ENCODE measurements at regions of chr6 and their contacts with region 1.

Region 1: GRCh38 chr6:146429806-146430205 is 113.8 kb upstream of the RAB32 start:
- DNase-seq: no peak
- H3K4me3 ChIP-seq: no peak overlapping the region
- CTCF ChIP-seq: no peak
- POLR2A ChIP-seq: no peak

Region 2: GRCh38 chr6:145756146-145756662 is 673.6 kb before region 1 on chr6:
- intact Hi-C with region 1: no loop called
- DNase-seq: peak in 1 of 2 donors; percentile 41
- H3K4me3 ChIP-seq: no peak overlapping the region
- CTCF ChIP-seq: no peak
- POLR2A ChIP-seq: no peak

Region 3: DNA sequence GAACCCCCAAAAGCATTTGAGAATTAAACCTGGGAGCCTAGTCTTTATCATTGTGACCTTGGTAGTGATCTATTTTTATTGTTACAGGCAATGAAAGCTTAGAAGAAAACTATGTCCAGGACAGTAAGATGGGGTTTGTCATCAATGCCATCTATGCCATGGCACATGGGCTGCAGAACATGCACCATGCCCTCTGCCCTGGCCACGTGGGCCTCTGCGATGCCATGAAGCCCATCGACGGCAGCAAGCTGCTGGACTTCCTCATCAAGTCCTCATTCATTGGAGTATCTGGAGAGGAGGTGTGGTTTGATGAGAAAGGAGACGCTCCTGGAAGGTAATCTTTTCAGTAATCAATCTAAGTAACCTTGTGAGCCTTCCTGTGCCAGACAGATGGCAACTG is 77.6 kb before region 1 on chr6:
- intact Hi-C with region 1: loop called (anchors 2 kb)
- DNase-seq: no peak
- H3K4me3 ChIP-seq: no peak overlapping the region
- CTCF ChIP-seq: no peak
- POLR2A ChIP-seq: no peak

Region 4: GRCh38 chr6:146785001-146785585 is 355.3 kb after region 1 on chr6:
- intact Hi-C with region 1: no loop called
- DNase-seq: no peak
- H3K4me3 ChIP-seq: no peak overlapping the region
- CTCF ChIP-seq: no peak
- POLR2A ChIP-seq: no peak

Measured in lower leg skin (tissue), 4 donors.